Activated CD4-positive, alpha-beta T cell treated with anti-CD3 and anti-CD28 coated beads for 36 hours (primary cell): ENCODE measurements at regions of chr20 and their contacts with region 1.

Region 1: GRCh38 chr20:53708129-53708968 is 114.7 kb upstream of the ZNF217 start:
- DNase-seq: peak; percentile 66
- ATAC-seq: peak; percentile 81
- H3K4me3 Mint-ChIP-seq: peak overlapping the region; percentile 59
- H3K27ac Mint-ChIP-seq: peak overlapping the region; percentile 94
- H3K4me1 Mint-ChIP-seq: peaks cover 51% of the 10 kb centered on the region
- H3K27me3 Mint-ChIP-seq: no peaks in the 10 kb centered on the region

Region 2: DNA sequence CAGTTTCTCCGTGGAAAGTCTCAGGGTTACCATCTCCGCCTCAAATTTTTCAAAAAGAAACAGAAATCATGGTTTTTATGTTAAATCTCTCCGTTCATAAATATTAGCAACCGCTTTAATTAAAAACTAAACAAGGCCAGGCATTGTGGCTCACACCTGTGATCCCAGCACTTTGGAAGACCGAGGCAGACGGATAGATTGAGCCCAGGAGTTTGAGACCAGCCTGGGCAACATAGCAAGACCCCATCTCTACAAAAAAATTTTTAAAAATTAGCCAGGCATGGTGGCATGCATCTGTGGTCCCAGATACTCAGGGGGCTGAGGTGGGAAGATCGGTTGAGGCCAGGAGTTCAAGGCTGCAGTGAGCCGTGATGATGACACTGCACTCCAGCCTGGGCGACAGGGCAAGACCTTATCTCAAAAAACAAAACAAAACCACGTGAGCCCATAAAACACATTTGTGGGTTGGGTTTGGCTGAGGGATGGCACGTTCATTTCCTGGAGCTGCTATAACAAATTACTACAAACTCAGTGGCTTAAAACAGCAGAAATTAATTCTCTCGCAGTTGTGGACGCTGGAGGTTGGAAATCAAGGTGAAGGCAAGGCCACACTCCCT is 337.9 kb before region 1 on chr20:
- CTCF ChIA-PET with region 1: no interaction called
- POLR2A ChIA-PET with region 1: no interaction called
- intact Hi-C with region 1: no loop called
- DNase-seq: no peak
- ATAC-seq: no peak
- H3K4me3 Mint-ChIP-seq: no peak overlapping the region
- H3K27ac Mint-ChIP-seq: no peak overlapping the region
- H3K4me1 Mint-ChIP-seq: peaks cover 15% of the 10 kb centered on the region
- H3K27me3 Mint-ChIP-seq: no peaks in the 10 kb centered on the region

Region 3: DNA sequence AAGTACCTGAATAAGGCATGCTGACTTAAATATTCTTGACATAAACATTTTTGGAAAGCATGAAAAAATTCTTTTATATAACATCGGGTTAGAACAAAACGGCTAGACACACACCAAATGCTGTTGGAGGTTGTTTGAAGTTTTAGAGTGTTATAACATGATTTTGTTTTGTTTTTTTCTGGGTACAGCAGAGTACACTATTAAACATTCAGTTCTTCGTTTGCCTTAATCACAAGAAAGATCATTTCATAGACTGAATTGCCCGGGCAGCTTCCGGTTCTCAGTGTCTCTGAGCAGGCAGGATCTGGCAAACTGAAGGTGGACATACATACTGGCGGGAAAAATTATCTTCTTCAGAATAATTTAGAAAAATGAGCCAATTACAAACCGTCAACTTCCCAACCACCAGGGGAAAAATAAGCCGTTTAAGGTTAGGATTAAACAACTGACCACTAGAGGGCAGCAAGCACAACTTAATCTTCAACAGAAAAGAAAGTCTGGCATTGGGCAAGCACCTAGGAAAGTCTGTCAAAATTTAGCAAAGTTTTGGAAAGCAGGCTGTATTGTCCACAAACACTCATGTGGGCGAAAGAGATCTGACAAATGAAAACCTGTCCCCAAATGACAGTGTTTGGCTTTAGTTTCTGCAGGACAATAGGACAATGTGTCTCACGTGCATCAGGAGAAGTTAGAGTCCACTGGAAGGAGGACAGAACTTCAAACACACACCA is 129.7 kb before region 1 on chr20:
- CTCF ChIA-PET with region 1: interaction called, 6 read pairs
- POLR2A ChIA-PET with region 1: interaction called, 4 read pairs
- intact Hi-C with region 1: loop called (anchors 1 to 2 kb)
- DNase-seq: peak; percentile 62
- ATAC-seq: peak; percentile 45
- H3K4me3 Mint-ChIP-seq: peak overlapping the region; percentile 70
- H3K27ac Mint-ChIP-seq: peak overlapping the region; percentile 83
- H3K4me1 Mint-ChIP-seq: peaks cover 91% of the 10 kb centered on the region
- H3K27me3 Mint-ChIP-seq: no peaks in the 10 kb centered on the region

Region 4: DNA sequence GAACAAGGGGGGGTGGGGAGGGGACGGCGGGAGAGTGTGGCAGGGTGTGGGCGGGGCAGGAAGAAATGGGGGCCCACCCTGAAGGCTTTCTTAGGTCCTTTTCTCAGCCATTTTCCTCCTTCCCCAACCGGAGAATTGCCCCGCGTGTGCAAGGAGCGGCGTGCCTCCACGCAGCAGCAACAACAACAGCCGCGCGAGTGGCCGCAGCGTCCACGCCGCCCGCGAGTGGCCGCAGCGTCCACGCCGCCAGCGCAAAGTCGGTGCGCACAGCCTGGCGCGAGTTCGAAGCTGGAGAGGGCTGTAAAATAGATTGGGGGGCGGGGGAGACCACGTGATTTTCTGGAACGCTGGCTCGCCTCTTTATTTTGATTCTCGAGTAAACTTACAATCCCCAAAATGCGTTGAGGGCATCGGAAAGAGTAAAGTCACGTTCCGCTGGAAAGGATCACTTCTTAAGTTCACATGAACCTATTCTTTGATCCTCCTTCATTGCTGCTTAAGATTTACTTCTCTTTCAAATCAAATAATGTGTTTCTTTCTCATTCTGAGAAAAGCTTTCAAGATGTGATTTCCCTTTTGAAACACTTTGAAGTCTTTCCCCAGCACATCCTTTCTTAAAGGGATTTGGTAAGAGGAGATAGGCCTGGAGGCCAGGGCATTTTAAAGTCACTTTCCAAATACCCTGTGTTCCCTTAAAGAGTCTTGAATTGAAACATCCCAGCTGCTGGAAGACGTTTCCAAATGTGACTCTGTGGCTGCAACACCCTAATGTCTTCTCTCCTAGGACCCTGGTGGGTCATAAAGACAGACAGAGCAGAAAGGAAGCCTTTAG is 48.1 kb before region 1 on chr20:
- CTCF ChIA-PET with region 1: no interaction called
- POLR2A ChIA-PET with region 1: interaction called, 4 read pairs
- intact Hi-C with region 1: loop called (anchors 1 to 2 kb)
- DNase-seq: peak; percentile 69
- ATAC-seq: peak; percentile 61
- H3K4me3 Mint-ChIP-seq: peak overlapping the region; percentile 74
- H3K27ac Mint-ChIP-seq: peak overlapping the region; percentile 93
- H3K4me1 Mint-ChIP-seq: peaks cover 69% of the 10 kb centered on the region
- H3K27me3 Mint-ChIP-seq: no peaks in the 10 kb centered on the region

Region 5: DNA sequence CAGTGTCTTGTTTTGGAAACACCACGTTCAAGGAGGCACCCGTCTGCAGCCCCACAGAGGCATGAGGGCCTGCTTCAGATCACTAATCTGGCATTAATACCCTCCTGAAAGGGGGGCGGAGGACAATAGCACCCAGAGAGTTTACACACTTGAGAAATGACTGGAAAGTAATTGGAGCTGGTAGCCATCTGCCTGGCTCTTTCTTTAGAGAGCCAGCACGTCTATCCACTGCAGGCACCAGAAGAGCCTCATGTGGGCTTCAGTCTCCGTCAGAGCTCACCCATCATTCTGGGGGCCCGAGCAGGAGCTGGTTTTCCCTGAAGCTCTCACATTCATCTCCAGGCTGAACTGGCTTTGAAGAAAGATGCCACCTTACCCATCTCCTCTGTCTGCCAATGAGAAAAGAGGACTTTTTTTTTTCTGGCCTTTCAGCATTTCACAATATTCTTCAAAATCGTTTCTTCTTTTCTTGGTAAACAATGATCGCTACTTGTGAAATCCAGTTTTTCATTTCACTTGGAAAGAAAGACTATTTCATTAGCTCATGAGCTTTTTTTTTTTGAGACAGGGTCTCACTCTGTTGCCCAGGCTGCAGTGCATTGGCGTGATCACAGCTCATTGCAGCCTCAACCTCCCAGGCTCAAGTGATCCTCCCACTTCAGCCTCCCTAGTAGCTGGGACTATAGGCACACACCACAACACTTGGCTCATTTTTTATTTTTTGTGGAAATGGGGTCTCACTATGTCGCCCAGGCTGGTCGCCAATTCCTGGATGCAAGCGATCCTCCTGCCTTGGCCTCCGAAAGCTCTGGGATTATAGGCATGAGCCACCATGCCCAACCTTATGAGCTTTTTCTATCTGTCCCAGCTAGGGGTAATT is 10.0 kb after region 1 on chr20:
- CTCF ChIA-PET with region 1: no interaction called
- POLR2A ChIA-PET with region 1: interaction called, 15 read pairs
- intact Hi-C with region 1: no loop called
- DNase-seq: no peak
- ATAC-seq: no peak
- H3K4me3 Mint-ChIP-seq: no peak overlapping the region
- H3K27ac Mint-ChIP-seq: peak overlapping the region; percentile 13
- H3K4me1 Mint-ChIP-seq: peaks cover 14% of the 10 kb centered on the region
- H3K27me3 Mint-ChIP-seq: no peaks in the 10 kb centered on the region

Region 6: DNA sequence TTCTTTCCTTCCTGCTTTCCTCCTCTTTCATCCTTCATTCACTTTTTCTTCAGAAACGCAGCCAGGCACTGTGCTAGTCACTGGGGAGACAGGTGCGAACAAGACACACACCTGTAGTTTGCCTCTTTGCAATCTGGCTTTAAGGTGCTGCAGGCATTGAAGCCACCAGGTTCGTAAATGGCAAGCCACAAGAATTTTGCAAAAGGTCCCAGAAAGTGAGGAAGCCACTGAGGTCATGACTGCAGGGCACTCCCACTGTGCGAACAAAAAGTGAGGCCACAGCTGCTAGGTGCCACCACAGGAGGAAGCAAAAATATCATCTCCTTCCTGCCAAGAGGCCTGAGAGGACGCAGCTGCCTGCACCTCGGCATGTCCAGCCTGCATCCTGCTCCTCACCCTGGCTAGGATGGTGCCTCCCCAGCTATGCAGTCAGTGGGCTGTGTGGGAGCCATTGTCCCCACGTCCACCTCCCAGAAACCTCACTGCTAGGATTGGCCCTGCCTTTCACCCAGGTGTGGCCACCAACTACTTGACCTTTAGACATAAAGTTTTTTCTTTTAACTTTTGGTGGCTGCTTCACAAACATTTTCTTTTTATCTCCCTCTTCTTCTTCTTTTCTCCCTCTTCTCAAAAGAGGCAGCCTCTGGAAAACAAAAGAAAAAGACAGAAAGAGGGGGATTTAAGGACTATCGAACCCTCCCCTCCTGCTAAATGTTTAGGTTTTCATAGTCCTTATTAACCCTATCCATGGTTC is 131.3 kb after region 1 on chr20:
- CTCF ChIA-PET with region 1: interaction called, 4 read pairs
- POLR2A ChIA-PET with region 1: interaction called, 3 read pairs
- intact Hi-C with region 1: loop called (anchors 1 to 5 kb)
- DNase-seq: peak; percentile 66
- ATAC-seq: peak; percentile 16
- H3K4me3 Mint-ChIP-seq: peak overlapping the region; percentile 45
- H3K27ac Mint-ChIP-seq: peak overlapping the region; percentile 62
- H3K4me1 Mint-ChIP-seq: peaks cover 69% of the 10 kb centered on the region
- H3K27me3 Mint-ChIP-seq: no peaks in the 10 kb centered on the region

Region 7: GRCh38 chr20:53915446-53916172 is 207.3 kb after region 1 on chr20:
- CTCF ChIA-PET with region 1: interaction called, 17 read pairs
- POLR2A ChIA-PET with region 1: interaction called, 3 read pairs
- intact Hi-C with region 1: loop called (anchors 1 to 5 kb)
- DNase-seq: peak; percentile 98
- ATAC-seq: peak; percentile 96
- H3K4me3 Mint-ChIP-seq: peak overlapping the region; percentile 79
- H3K27ac Mint-ChIP-seq: peak overlapping the region; percentile 91
- H3K4me1 Mint-ChIP-seq: peaks cover 41% of the 10 kb centered on the region
- H3K27me3 Mint-ChIP-seq: no peaks in the 10 kb centered on the region

Region 8: DNA sequence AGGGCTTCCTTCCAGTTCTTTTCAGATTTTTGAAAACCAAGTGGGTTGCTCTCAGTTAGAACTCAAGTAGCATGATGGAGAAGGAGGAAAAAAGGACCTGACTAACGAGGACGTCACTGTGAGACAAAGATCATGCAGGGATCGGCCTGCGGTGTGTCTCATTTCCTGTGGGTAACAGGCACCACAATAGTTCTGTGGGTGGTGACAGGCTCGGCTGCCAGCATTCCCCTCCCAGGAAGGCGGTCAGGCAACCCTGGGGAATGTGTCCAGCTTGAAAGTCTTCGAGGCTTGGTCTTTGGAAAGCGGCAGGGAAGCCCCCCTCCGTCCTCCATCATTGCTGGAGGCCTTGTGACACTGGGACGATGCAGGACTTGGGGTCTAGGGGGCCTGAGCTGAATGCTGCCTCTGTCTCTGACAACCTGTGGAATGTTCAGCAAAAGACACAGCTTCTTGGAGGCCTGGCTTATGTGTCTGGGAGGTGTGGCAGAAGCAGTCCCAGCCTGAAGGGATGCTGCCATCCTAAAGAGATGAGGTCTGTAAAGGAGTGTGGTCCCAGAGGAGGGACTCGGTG is 241.1 kb after region 1 on chr20:
- CTCF ChIA-PET with region 1: no interaction called
- POLR2A ChIA-PET with region 1: no interaction called
- intact Hi-C with region 1: no loop called
- DNase-seq: peak; percentile 88
- ATAC-seq: peak; percentile 94
- H3K4me3 Mint-ChIP-seq: peak overlapping the region; percentile 64
- H3K27ac Mint-ChIP-seq: peak overlapping the region; percentile 92
- H3K4me1 Mint-ChIP-seq: peaks cover 29% of the 10 kb centered on the region
- H3K27me3 Mint-ChIP-seq: no peaks in the 10 kb centered on the region

Region 9: GRCh38 chr20:54345301-54345724 is 637.0 kb after region 1 on chr20:
- CTCF ChIA-PET with region 1: no interaction called
- POLR2A ChIA-PET with region 1: no interaction called
- intact Hi-C with region 1: no loop called
- DNase-seq: no peak
- ATAC-seq: peak; percentile 42
- H3K4me3 Mint-ChIP-seq: no peak overlapping the region
- H3K27ac Mint-ChIP-seq: no peak overlapping the region
- H3K4me1 Mint-ChIP-seq: peaks cover 12% of the 10 kb centered on the region
- H3K27me3 Mint-ChIP-seq: peaks cover 16% of the 10 kb centered on the region